ENCODE measurements at regions of chr4 and their contacts with region 1.

Region 1: GRCh38 chr4:10480616-10481015 is 23.4 kb upstream of the ZNF518B start:
- DNase-seq: no peak
- H3K4me3 ChIP-seq: no peak overlapping the region
- H3K27me3 ChIP-seq: no peaks in the 10 kb centered on the region; the same call in 1 of the 2 replicates
- CTCF ChIP-seq: no peak

Region 2: DNA sequence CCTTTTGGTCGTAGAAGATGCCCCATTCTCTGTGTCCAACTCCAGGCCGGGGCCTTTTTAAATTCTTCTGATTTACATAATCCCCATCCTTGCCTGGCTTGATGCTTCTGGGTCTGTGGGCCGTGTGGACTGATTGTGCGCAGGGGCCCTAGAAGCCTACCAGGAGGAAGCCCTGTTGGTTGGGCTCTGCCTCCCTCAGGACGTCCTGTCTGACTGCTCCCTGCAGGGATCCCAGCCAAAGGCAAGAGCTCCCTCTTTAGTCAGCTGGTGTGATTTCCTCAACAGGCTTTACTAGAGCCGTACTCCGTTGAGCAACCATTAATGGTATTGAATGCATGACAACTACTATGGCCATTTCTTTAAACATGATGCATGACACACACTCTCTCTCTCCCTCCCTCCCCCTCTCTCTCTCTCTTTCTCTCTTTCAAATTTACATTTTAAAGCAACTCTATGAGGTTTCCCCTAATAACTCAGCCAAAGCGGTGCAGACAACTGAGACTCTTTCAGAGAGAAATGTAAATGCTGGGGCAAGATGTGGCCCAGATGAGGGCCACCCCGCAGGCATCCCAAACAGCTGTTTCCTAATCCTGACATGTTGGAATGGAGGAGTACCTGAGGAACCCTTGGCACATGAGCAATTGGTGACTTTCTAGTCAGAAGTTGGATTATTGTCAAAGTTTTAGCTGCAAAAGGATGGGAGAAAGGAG is 581.9 kb before region 1 on chr4:
- CTCF ChIA-PET with region 1: no interaction called
- POLR2A ChIA-PET with region 1: no interaction called
- DNase-seq: no peak
- H3K4me3 ChIP-seq: no peak overlapping the region
- H3K27me3 ChIP-seq: no peaks in the 10 kb centered on the region
- CTCF ChIP-seq: no peak

Region 3: DNA sequence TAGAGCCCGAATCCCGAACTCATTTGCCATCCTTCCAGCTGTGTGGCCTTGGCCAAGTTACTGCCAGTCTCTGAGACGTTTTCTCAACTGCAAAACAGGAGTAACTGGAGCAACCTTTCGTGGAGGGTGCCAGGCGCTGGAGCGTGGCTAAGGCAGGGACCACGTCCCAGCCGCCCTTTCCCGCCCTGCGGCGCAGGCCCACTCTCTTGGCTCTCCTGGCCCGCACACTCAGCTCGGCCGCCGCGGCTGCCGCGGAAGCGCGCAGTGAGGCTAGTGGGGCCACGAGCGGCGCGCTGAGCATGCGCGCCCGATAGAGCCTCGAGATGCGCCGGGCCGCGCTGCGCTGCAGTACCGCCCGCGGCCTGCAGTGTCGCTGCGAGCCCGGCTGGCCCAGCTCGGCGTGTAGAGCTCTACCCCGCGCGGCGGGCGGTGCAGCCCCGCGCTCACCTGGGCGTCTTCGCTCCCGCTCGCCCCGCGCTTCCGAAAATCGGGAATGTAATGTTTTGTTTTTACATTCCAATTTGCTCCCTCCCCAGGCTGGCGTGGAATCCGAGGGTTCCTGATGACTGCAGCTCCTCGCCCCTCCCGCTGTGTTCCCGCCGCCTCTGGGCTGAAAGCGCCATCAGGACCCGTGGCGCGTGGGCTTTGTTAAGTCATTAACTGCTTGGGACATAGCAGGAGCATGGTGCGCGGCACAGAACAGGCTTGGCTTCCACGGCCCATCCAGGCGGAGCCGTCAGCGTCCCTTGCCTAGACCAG is 19.3 kb before region 1 on chr4:
- CTCF ChIA-PET with region 1: interaction called, 15 read pairs
- POLR2A ChIA-PET with region 1: no interaction called
- DNase-seq: no peak
- H3K4me3 ChIP-seq: peak overlapping the region; percentile 21; the same call in 1 of the 2 replicates
- H3K27me3 ChIP-seq: peaks cover 4% of the 10 kb centered on the region
- CTCF ChIP-seq: peak; percentile 56

Measured in BJ (cell line).